ENCODE measurements at regions of chr16 and their contacts with region 1.

Region 1: GRCh38 chr16:48353565-48354163 is 31.5 kb downstream of the SIAH1 start:
- DNase-seq: peak in 4 of 6 donors; percentile 39 to 66 (median 44)
- ATAC-seq: peak; percentile 88 to 96 (median 92)
- H3K4me3 ChIP-seq: no peak overlapping the region
- H3K27ac ChIP-seq: no peak overlapping the region
- H3K4me1 ChIP-seq: no peaks in the 10 kb centered on the region
- H3K27me3 ChIP-seq: no peaks in the 10 kb centered on the region
- CTCF ChIP-seq: peak; percentile 63 to 88 (median 76)

Region 2: GRCh38 chr16:48542020-48542473 is 188.4 kb after region 1 on chr16:
- intact Hi-C with region 1: loop called in 1 of 3 experiments (anchors 10 kb)
- DNase-seq: peak in 3 of 6 donors; percentile 34 to 44 (median 44)
- ATAC-seq: peak; percentile 32 to 74 (median 68)
- H3K4me3 ChIP-seq: no peak overlapping the region
- H3K27ac ChIP-seq: no peak overlapping the region
- H3K4me1 ChIP-seq: peaks cover 2 to 11% (median 10%) of the 10 kb centered on the region in 3 donors
- H3K27me3 ChIP-seq: no peaks in the 10 kb centered on the region
- CTCF ChIP-seq: no peak

Region 3: DNA sequence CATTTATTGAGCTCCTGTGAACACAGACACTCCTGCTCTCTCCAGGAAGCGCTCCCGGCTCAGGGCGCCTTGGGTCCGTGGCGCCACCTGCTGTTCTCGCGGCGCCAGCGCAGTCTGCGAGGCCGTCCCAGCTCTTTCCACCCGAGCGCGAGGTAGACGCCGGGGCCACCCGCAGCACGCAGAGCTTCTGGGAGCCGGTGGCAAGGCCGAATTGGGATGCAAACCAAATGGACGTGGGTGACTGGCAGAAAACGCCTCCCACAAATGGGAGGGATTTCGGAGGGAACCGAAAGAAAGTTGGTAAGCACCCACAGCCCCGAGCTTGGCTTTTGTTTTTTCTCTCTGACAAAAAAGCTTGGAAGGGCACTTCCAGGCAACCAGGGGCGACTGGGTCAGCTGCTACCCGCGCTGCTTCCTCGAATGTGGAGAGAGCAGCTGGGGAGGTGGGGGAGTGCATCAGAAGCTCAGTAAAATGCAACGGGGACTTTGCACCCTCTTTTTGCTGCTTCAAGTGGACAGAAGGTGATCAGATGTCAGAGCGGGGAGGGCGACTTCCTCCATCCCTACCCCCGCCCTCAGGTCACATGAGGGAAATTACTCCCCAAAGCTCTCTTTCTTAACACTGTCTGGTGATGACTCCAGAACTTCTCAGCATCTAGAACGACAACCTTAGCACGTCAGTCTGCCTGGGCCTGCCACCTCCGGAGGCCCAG is 269.8 kb after region 1 on chr16:
- intact Hi-C with region 1: loop called in 2 of 3 experiments (anchors 5 to 10 kb)
- DNase-seq: peak; percentile 69 to 95 (median 86)
- ATAC-seq: peak; percentile 97 to 99 (median 99)
- H3K4me3 ChIP-seq: peak overlapping the region; percentile 11 to 43 (median 28)
- H3K27ac ChIP-seq: peak overlapping the region; percentile 24 to 73 (median 54)
- H3K4me1 ChIP-seq: peaks cover 6 to 8% (median 7%) of the 10 kb centered on the region in 3 donors
- H3K27me3 ChIP-seq: no peaks in the 10 kb centered on the region
- CTCF ChIP-seq: peak; percentile 94 to 99 (median 97)

Region 4: DNA sequence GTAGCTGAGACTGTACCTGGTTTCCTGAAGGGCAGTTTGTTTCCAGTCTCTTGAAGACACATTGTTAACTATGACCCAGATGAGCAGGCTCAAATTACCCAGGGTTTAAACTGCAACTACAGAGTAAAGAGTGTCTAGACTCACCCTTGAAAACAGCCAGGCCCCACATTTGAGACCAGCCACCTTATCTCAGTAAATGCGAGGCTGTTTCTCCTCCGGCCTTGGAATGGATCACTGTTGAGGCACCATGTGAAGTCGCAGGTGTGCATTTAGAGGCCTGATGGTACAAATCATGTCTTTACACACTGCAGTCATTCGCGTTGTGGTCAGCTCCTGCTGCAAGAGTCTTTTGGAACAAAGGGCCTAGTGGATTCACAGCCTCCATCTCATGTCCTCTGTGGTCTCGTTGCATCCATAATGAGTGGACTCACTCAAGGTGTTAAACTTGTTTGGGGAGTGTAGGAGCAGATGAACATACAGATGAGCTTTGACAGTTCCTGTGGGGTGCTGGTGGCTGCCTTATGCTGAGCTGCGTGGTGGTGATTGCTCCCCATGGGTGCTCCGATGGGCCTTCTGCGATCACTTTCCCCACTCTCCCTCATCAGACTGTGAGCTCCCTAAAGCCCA is 274.8 kb after region 1 on chr16:
- intact Hi-C with region 1: loop called in 2 of 3 experiments (anchors 5 to 10 kb)
- DNase-seq: no peak
- ATAC-seq: no peak
- H3K4me3 ChIP-seq: no peak overlapping the region
- H3K27ac ChIP-seq: no peak overlapping the region
- H3K4me1 ChIP-seq: no peaks in the 10 kb centered on the region
- H3K27me3 ChIP-seq: no peaks in the 10 kb centered on the region
- CTCF ChIP-seq: no peak

Region 5: DNA sequence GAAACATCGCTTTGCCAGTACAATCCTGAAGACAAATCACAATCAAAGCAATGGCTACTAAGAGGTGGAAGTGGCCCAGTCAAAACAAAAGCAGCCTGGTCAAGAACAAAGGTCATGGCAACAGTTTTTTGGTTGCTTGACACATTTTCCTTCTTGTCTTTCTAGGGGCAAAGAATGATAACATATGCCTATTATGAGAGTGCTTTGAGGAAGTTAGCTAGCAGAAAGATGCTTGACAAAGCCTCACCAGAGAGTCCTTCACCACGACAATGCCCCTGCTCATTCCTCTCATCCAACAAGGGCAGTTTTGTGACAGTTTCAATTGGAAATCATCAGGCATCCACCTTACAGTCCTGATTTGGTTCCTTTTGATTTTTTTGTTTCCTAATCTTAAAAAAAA is 288.1 kb after region 1 on chr16:
- intact Hi-C with region 1: no loop called
- DNase-seq: no peak
- ATAC-seq: no peak
- H3K4me3 ChIP-seq: no peak overlapping the region
- H3K27ac ChIP-seq: no peak overlapping the region
- H3K4me1 ChIP-seq: no peaks in the 10 kb centered on the region
- H3K27me3 ChIP-seq: no peaks in the 10 kb centered on the region
- CTCF ChIP-seq: no peak

Measured in pancreas (tissue), 10 donors.